ENCODE measurements at regions of chr6 and their contacts with region 1.

Region 1: DNA sequence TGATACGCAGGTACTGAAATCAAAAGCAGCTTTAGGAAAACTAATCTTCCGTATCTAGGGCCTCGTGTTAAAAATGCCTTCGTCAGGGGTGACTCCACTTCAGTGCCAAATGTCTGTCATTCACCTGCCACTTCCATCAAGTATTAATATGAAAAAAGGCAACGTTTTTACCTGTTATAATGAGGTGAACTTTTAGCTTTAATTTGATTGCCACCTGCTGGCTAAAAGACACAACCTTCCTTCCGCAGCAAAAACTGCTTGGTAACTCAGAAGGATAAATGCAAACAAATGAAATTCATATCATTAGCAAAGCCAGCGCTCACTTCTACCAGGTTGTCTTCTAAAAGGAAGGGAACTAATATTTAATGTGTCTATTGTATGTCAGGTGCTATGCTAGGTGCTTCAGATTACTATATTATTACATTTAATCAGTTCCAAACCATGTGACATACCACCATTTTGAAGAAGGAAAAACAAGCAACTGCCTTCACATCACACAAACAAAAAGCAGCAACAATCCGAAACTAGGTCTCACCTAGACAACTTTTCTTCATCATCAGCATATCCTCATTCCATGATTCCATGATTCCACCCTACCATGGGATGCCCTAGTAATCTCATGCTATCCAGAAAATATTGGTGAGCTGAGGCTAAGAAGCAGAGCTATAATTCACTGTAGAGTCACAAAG is 20.6 kb upstream of the ARHGAP18 start:
- DNase-seq: no peak
- H3K4me3 ChIP-seq: no peak overlapping the region
- H3K27ac ChIP-seq: peak overlapping the region; percentile 9
- H3K4me1 ChIP-seq: peaks cover 20% of the 10 kb centered on the region
- H3K27me3 ChIP-seq: no peaks in the 10 kb centered on the region
- CTCF ChIP-seq: peak; percentile 47 to 63

Region 2: DNA sequence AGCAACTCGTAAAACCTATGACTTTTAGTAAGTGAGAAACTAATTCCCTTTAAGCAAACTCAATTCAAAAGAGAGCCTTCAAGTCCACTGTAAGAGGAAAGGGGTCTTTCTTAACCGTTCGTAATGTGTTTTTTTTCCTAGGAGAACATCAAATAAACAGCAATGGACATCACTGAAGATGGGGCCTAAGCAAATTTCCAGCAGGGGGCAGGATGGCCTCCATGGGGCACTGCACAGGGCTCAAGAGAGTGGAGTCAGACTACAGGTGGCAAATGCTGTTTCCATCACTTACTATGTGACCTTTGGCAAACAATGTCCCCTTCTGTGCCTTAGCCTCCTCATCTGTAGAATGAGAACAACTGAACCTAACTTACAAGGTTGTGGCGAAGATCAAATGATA is 109.4 kb before region 1 on chr6:
- CTCF ChIA-PET with region 1: interaction called, 3 read pairs
- dilution Hi-C with region 1: no loop called
- in situ Hi-C with region 1: no loop called
- intact Hi-C with region 1: loop called (anchors 2 kb)
- DNase-seq: no peak
- H3K4me3 ChIP-seq: no peak overlapping the region
- H3K27ac ChIP-seq: no peak overlapping the region
- H3K4me1 ChIP-seq: peaks cover 8% of the 10 kb centered on the region
- H3K27me3 ChIP-seq: no peaks in the 10 kb centered on the region
- CTCF ChIP-seq: peak in 1 of 2 donors; percentile 52

Region 3: GRCh38 chr6:129748212-129748900 is 17.7 kb after region 1 on chr6:
- CTCF ChIA-PET with region 1: no interaction called
- dilution Hi-C with region 1: no loop called
- in situ Hi-C with region 1: no loop called
- intact Hi-C with region 1: loop called (anchors 1 kb)
- DNase-seq: peak; percentile 70
- H3K4me3 ChIP-seq: no peak overlapping the region
- H3K27ac ChIP-seq: peak overlapping the region; percentile 91
- H3K4me1 ChIP-seq: peaks cover 43% of the 10 kb centered on the region
- H3K27me3 ChIP-seq: no peaks in the 10 kb centered on the region
- CTCF ChIP-seq: peak in 1 of 2 donors; percentile 42

Region 4: DNA sequence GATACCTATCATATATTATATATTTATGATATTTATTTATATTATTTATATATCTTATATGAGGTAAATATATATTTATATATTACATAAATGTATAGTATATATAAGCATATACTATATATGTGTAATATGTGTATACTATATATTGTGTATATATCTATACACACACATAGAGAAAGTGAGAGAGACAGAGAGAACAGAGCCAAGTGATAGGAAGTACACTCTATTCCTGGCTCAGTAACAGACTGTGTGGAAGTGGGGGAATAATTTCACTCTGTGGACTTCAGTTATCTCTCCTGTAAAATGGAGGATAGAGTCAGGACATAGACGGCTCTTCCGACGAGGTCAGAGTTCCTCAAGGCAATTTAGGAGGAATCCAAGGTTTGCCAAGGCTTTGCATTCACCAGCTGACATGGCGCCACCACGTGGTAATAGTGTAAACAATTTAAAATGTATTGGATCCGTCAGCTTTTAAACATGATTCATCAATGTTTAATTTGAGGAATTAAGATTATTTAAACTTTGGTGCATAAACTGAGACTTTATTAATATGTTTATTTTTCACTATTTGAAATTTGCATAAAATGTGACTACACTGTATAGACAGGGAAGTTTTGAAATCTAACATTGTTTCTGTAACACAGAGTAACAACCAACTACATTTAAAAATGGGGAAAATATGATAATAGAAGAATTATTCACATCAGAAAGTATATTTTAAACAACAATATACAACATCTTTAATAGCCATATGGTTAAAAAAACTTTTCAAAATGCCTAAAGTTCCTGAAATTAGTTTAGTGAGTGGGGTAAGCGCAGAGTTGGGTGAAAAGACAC is 205.9 kb after region 1 on chr6:
- CTCF ChIA-PET with region 1: no interaction called
- dilution Hi-C with region 1: no loop called
- in situ Hi-C with region 1: no loop called
- intact Hi-C with region 1: loop called (anchors 1 kb)
- DNase-seq: peak; percentile 62
- H3K4me3 ChIP-seq: peak overlapping the region in 1 of 3 experiments; percentile 6
- H3K27ac ChIP-seq: no peak overlapping the region
- H3K4me1 ChIP-seq: no peaks in the 10 kb centered on the region
- H3K27me3 ChIP-seq: no peaks in the 10 kb centered on the region
- CTCF ChIP-seq: peak; percentile 53 to 70

Region 5: DNA sequence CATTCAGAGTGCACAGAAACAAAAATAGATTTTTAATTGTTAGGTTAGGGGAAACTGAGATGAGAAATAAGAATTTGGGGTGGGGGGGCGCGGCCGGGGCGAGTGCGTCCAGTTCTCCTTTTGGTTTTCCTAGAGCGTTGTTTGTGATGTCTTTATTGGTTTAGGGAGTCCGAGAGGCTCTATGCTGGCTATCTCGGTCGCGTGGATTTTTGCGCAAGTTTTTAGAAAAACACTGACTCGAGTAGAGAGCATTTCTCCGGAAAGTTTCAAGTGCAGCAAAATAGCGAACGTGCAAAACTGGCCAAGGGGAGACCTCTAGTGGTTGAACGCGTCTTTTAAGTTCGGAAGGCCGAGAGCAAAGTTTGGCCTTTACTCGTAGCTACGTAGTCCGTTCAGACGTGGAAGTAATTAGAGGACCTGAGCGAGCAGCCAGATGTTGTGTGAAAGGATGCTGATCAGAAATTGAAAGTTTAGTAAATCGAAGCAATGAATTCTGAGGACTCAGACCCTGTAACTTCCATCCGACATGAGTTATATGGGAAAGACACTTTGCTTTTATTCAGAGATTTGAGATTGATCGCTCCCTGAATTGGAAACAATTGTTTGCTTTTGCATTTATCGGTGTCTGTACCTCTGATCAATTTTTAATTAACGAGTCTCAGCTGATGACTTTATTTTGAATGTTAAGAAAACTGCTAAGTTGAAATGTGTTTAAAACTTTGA is 290.4 kb after region 1 on chr6:
- CTCF ChIA-PET with region 1: interaction called, 3 read pairs
- dilution Hi-C with region 1: no loop called
- in situ Hi-C with region 1: no loop called
- intact Hi-C with region 1: loop called (anchors 2 kb)
- DNase-seq: peak; percentile 84
- H3K4me3 ChIP-seq: peak overlapping the region; percentile 57 to 78 (median 76)
- H3K27ac ChIP-seq: no peak overlapping the region
- H3K4me1 ChIP-seq: peaks cover 8% of the 10 kb centered on the region
- H3K27me3 ChIP-seq: no peaks in the 10 kb centered on the region
- CTCF ChIP-seq: peak; percentile 73 to 88